ENCODE measurements at regions of chr1 and their contacts with region 1.

Region 1: DNA sequence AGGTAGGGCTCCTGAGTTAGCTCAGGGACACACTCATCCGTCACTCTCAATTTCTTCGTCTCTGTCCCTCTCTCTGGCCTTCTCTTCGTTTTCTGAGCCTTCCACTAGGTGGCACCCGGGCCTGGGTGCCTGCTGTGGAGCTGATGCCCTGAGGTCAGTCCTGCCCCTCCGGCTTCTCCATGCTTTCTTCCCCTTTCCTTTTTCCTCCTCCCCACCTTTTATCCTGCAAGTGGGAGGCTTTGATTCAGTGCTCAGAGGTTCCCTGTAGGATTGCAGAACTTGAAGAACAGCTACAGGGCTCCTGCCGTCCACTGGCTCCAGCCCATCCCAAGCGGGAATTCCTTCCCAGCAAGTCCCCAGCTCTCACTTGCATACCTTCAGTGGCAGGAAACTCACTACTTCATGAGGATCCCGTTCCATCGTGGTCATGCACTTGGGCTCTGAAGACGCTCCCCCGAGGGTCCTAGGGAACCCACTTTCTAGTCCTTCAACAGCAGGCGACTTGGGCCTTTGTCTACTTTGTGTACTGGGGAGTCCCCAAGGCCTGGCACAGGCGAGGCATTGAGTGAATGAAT is 45.6 kb downstream of the SRRM1 start:
- ATAC-seq: peak; percentile 54 to 97 (median 67)
- H3K4me3 ChIP-seq: no peak overlapping the region
- H3K27ac ChIP-seq: no peak overlapping the region
- H3K4me1 ChIP-seq: peaks cover 5 to 8% of the 10 kb centered on the region in 2 donors

Region 2: DNA sequence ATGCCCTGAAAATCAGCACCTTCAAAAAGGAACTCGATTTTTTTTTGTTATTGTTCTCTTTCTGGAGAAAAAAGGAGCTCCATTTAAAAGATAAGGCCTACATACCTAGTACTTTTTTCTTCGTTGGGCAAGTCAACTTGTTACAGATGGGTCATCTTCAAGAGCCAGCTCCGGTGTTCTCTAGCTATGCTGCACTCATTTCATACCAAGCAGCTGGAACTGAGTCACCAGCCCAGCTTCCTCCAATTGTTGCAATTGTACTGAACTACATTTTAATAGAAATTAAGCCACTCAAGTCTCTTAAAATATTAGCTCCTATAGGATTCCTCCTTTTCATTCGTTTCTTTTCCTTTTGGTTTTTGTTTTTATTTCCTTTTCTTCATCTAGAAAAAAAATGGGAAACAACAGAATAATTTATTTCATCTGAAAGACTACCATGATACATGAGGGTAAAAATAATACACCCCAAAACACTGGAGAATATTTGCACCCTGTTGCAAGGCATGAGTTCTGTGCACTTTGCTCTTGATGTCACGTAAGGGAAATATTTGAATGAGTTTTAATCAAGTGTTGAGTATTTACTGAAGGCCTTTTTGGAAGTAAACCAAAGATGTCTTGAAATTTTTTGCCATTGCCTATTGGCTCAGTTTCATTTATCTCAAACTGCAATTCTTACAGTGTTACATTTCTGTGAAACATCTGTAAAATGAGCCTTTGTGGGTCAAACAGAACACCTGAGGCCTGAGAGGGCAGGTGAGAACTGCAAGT is 117.0 kb after region 1 on chr1:
- in situ Hi-C with region 1: loop called in 1 of 9 experiments (anchors 25 kb)
- ATAC-seq: peak in 1 of 8 experiments; percentile 63
- H3K4me3 ChIP-seq: no peak overlapping the region
- H3K27ac ChIP-seq: no peak overlapping the region
- H3K4me1 ChIP-seq: no peaks in the 10 kb centered on the region

Region 3: GRCh38 chr1:24822887-24823286 is 134.2 kb after region 1 on chr1:
- in situ Hi-C with region 1: loop called in 5 of 9 experiments (anchors 10 to 25 kb)
- ATAC-seq: no peak
- H3K4me3 ChIP-seq: no peak overlapping the region
- H3K27ac ChIP-seq: no peak overlapping the region
- H3K4me1 ChIP-seq: peaks cover 0 to under 1% of the 10 kb centered on the region in 2 donors

Region 4: GRCh38 chr1:24830680-24831272 is 142.1 kb after region 1 on chr1:
- in situ Hi-C with region 1: loop called in 8 of 9 experiments (anchors 5 to 25 kb)
- ATAC-seq: peak; percentile 67 to 80 (median 74)
- H3K4me3 ChIP-seq: no peak overlapping the region
- H3K27ac ChIP-seq: no peak overlapping the region
- H3K4me1 ChIP-seq: peaks cover 7 to 23% of the 10 kb centered on the region in 2 donors

Region 5: DNA sequence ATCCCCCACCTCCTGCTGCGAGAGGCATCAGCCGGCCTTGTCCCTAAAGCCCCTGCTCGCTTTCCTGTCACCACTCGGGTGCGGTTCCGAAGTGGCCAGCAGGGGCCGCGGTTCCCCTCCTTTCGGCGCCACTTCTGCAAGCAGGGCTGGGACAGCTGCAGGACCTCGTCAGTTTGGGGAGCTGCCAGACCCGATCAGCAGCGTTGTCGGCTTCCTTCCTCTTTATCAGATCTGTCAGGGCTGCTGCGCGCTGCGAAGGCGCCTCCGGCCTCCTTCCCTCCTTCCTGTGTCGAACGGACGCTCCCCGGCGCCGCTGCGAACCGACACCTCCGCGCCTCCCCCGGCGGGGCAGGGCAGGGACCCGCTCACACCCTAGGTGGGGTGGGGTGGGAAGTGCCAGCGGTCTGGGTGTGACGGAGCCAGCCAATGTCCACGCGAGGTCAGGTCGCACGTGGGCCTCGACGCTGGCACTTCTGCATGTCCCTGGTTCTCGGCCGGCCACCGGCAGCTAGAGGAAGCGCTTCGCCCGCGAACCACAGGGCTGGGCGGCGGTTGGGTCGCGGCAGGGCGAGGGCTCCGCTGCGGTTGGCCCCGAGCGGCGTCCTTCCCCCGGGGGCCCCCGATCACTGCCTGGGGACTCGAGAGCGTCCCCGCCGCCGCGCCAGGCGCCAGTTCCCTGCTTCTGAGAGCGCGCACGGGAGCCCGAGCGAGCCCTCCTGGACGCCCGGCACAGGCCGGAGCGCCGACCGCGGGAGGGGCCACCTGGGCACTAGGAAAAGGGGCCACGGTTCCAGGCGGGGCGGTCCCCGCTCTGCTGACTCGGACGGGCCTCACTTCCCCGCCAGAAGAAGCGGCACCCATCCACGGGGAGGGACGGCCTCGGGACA is 159.5 kb after region 1 on chr1:
- in situ Hi-C with region 1: loop called in 3 of 9 experiments (anchors 25 kb)
- ATAC-seq: peak; percentile 87 to 94 (median 92)
- H3K4me3 ChIP-seq: peak overlapping the region; percentile 24 to 43 (median 33)
- H3K27ac ChIP-seq: no peak overlapping the region
- H3K4me1 ChIP-seq: no peaks in the 10 kb centered on the region

Region 6: DNA sequence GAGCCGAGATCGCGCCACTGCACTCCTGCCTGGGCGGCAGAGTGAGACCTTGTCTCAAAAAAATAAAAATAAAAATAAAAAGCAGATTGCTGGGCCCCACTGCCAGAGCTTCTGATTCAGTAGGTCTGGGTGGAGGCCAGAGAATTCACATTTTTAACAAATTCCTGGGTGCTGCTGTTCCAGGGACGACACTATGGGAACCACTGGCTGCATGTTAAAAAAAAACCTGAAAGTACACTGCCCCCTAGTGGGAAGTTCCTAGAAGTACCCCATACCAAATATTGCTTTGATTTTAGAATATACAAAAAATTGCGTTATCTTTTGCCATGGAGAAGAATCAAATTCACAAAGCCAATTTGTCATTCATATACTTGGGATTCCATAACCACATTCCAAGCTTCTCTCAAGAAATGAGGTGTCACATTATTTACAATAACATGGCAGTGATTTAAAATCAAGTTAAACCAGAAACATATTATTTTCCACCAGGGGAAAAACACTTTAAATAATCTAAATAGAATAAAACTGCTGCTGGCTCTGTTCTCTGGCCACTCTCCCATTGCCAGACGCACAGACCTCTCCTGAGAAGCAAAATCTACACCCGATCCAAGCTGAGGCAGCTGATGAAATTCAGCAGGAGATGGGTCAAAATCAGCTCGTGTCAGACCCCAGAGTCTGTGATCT is 516.2 kb after region 1 on chr1:
- in situ Hi-C with region 1: loop called in 2 of 9 experiments (anchors 25 kb)
- ATAC-seq: peak in 7 of 8 experiments; percentile 30 to 80 (median 44)
- H3K4me3 ChIP-seq: no peak overlapping the region
- H3K27ac ChIP-seq: no peak overlapping the region
- H3K4me1 ChIP-seq: peaks cover 5 to 10% of the 10 kb centered on the region in 2 donors

Measured in motor neuron (in vitro differentiated cells).